ENCODE measurements at regions of chr1 and their contacts with region 1.

Region 1: GRCh38 chr1:200992382-200993048 is 31.0 kb downstream of the KIF21B start:
- DNase-seq: no peak
- ATAC-seq: no peak
- H3K4me3 ChIP-seq: no peak overlapping the region
- H3K4me3 Mint-ChIP-seq: no peak overlapping the region
- H3K27ac ChIP-seq: no peak overlapping the region
- H3K27ac Mint-ChIP-seq: no peak overlapping the region
- H3K4me1 ChIP-seq: no peaks in the 10 kb centered on the region
- H3K4me1 Mint-ChIP-seq: no peaks in the 10 kb centered on the region
- H3K27me3 ChIP-seq: no peaks in the 10 kb centered on the region
- H3K27me3 Mint-ChIP-seq: no peaks in the 10 kb centered on the region
- CTCF ChIP-seq: no peak

Region 2: DNA sequence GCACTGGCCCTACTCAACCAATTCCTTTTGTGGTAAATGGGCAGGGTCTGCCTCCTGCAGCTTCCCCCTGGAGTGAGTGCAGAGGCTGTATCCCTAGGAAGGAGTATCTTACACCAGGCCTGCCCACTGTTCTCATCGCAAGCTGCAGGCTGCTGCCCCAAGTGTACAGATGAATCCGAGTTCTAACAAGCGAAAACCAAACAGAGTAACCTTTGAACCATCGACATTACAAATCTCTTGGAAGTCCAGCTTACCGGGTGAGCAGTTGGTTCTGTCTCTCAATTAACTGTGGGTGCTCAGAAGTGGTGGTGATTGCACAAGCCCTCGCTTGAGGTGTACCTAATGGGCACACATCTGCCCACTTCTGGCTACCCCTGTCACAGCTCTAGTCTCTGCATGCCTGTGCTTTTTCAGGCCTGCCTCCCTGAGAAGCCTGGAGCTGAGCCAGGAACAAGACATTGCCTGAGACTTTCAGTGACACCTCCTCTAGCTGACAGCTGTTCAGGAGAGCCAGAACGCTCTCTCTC is 75.2 kb before region 1 on chr1:
- CTCF ChIA-PET with region 1: no interaction called
- POLR2A ChIA-PET with region 1: no interaction called
- intact Hi-C with region 1: no loop called
- DNase-seq: no peak
- ATAC-seq: no peak
- H3K4me3 ChIP-seq: no peak overlapping the region
- H3K4me3 Mint-ChIP-seq: no peak overlapping the region
- H3K27ac ChIP-seq: no peak overlapping the region
- H3K27ac Mint-ChIP-seq: no peak overlapping the region
- H3K4me1 ChIP-seq: no peaks in the 10 kb centered on the region
- H3K4me1 Mint-ChIP-seq: no peaks in the 10 kb centered on the region
- H3K27me3 ChIP-seq: no peaks in the 10 kb centered on the region
- H3K27me3 Mint-ChIP-seq: no peaks in the 10 kb centered on the region
- CTCF ChIP-seq: no peak

Region 3: GRCh38 chr1:200979574-200980451 is 12.7 kb before region 1 on chr1:
- CTCF ChIA-PET with region 1: interaction called, 28 read pairs
- POLR2A ChIA-PET with region 1: no interaction called
- intact Hi-C with region 1: no loop called
- DNase-seq: peak; percentile 68
- ATAC-seq: peak; percentile 54
- H3K4me3 ChIP-seq: no peak overlapping the region
- H3K4me3 Mint-ChIP-seq: no peak overlapping the region
- H3K27ac ChIP-seq: no peak overlapping the region
- H3K27ac Mint-ChIP-seq: no peak overlapping the region
- H3K4me1 ChIP-seq: no peaks in the 10 kb centered on the region
- H3K4me1 Mint-ChIP-seq: no peaks in the 10 kb centered on the region
- H3K27me3 ChIP-seq: no peaks in the 10 kb centered on the region
- H3K27me3 Mint-ChIP-seq: no peaks in the 10 kb centered on the region
- CTCF ChIP-seq: peak; percentile 80